Thyroid gland (tissue), 4 donors: ENCODE measurements at regions of chr19 and their contacts with region 1.

Region 1: GRCh38 chr19:51986309-51987291 is at the start of gene ZNF350:
- DNase-seq: peak; percentile 95
- H3K4me3 ChIP-seq: peak within 1 kb of the TSS; percentile 12 to 69 (median 62)
- H3K27ac ChIP-seq: peak within 1 kb of the TSS; percentile 23 to 49 (median 48)
- H3K4me1 ChIP-seq: peaks cover 6 to 11% of the 10 kb centered on the region in 2 donors
- H3K27me3 ChIP-seq: no peaks in the 10 kb centered on the region
- CTCF ChIP-seq: peak in 1 of 6 experiments; percentile 19
- POLR2A ChIP-seq: peak in 1 of 2 donors; percentile 23
- total RNA-seq, gene ZNF350: 12.0 to 27.4 (median 16.4) TPM

Region 2: GRCh38 chr19:51891193-51891747 is 95.3 kb before region 1 on chr19:
- intact Hi-C with region 1: loop called (anchors 10 kb)
- DNase-seq: no peak
- H3K4me3 ChIP-seq: no peak overlapping the region
- H3K27ac ChIP-seq: no peak overlapping the region
- H3K4me1 ChIP-seq: peaks cover 6 to 8% of the 10 kb centered on the region in 2 donors
- H3K27me3 ChIP-seq: no peaks in the 10 kb centered on the region
- CTCF ChIP-seq: no peak
- POLR2A ChIP-seq: no peak